ENCODE measurements at regions of chr7 and their contacts with region 1.

Region 1: GRCh38 chr7:48312151-48312550 is 140.9 kb downstream of the ABCA13 start:
- DNase-seq: no peak
- H3K4me3 Mint-ChIP-seq: no peak overlapping the region
- H3K27ac Mint-ChIP-seq: no peak overlapping the region
- H3K4me1 Mint-ChIP-seq: peaks cover 19% of the 10 kb centered on the region
- H3K27me3 Mint-ChIP-seq: no peaks in the 10 kb centered on the region
- CTCF ChIP-seq: no peak

Region 2: DNA sequence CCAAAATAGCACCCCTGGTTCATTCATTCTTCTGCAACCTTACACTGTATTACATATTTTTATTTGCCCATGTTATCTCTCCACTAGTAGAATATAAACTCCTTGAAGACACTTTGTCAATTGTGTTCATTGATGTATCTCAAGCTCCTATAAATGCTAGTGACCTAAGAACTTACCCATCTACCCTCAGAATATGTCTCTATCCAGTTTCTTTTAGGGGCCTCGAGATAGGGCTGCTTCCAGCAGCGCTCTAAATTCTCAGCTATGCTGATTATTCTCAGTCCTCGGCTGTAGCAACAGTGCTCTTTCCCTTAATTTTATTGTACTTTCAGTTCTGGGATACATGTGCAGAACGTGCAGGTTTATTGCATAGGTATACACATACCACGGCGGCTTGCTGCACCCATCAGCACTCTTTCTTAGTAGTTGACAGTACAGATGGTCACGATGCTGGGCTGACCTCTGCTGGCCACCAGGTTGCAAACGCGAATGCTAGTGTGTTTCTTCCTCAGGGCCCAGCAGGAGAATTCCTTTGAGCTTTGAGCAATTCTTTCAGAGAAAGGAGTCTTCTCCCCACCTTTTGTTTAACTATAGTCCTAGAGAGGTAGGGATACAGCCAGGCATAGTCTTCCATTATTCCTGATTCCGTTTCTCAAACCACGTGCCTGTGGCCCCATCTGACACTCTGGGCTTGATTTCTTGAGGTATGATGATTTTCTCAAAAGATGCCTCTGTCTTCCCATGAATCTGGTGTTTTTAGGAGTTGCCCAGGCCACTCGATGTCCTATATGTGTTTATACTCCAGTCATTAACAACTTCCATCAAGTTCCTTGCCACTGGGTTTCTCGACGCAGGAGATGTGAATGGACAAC is 563.1 kb after region 1 on chr7:
- CTCF ChIA-PET with region 1: interaction called, 12 read pairs
- POLR2A ChIA-PET with region 1: no interaction called
- intact Hi-C with region 1: no loop called
- DNase-seq: peak; percentile 43
- H3K4me3 Mint-ChIP-seq: no peak overlapping the region
- H3K27ac Mint-ChIP-seq: no peak overlapping the region
- H3K4me1 Mint-ChIP-seq: no peaks in the 10 kb centered on the region
- H3K27me3 Mint-ChIP-seq: peaks cover 49% of the 10 kb centered on the region
- CTCF ChIP-seq: peak; percentile 79